Left ventricle myocardium superior (tissue), 1 donor: ENCODE measurements at regions of chr1 and their contacts with region 1.

Region 1: DNA sequence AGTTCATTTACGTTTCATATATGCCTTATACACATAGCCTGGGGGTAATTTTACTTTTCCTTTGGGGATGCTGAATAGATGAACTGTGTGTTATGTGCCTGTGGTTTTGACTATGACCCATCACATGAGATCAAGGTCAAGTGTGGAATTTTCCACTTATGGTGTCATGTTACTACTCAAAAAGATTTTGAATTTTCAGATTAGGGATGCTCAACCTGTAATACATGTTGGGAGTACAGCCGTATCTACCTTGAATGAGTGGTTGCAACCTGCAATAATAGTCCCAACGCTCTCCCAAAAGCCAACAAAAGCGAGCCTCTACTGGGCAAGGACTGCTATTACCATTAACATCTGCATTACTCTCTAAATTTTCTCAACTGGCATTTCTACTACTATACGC is 68.5 kb upstream of the SDC3 start:
- DNase-seq: no peak
- ATAC-seq: peak; percentile 37

Region 2: DNA sequence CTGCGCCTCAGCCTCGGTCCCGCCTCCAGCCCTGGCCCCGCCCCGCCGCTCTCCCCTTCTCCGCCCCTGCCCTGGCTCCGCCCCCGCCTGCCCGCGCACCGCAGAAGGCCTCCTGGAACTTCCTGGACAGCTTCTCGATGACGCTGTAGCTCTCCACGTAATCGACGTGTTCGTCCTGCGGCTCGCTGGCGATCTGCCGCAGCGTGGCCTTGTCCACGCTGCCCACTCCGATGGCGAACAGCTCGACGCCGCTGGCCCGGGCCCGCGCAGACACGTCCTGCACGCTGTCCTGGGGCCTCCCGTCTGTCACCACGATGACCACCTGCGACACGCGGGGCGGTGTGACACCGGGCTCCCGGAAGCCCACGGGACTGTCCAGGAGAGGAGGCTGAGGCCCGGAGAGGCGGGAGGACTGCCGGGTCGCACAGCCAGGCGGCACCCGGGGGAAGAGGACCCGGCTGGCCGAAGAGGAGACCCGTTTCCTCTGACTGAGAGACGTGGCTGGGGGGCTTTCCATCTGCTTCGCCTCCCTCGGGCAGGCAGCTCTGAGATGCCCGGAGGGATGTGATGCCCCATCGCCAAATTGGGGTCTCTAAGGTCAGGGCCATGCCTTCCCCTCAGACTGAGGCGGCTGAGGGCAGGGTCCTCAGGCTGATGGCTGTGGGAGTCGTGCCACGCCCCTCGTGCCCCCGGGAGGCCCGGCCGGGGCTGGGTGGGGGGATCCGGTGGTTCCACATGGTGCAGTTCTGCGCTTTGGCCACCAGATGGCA is 258.3 kb before region 1 on chr1:
- intact Hi-C with region 1: no loop called
- DNase-seq: peak; percentile 82
- ATAC-seq: peak; percentile 87

Region 3: GRCh38 chr1:31027693-31028526 is 50.8 kb after region 1 on chr1:
- intact Hi-C with region 1: loop called (anchors 5 kb)
- DNase-seq: no peak
- ATAC-seq: peak; percentile 71

Region 4: DNA sequence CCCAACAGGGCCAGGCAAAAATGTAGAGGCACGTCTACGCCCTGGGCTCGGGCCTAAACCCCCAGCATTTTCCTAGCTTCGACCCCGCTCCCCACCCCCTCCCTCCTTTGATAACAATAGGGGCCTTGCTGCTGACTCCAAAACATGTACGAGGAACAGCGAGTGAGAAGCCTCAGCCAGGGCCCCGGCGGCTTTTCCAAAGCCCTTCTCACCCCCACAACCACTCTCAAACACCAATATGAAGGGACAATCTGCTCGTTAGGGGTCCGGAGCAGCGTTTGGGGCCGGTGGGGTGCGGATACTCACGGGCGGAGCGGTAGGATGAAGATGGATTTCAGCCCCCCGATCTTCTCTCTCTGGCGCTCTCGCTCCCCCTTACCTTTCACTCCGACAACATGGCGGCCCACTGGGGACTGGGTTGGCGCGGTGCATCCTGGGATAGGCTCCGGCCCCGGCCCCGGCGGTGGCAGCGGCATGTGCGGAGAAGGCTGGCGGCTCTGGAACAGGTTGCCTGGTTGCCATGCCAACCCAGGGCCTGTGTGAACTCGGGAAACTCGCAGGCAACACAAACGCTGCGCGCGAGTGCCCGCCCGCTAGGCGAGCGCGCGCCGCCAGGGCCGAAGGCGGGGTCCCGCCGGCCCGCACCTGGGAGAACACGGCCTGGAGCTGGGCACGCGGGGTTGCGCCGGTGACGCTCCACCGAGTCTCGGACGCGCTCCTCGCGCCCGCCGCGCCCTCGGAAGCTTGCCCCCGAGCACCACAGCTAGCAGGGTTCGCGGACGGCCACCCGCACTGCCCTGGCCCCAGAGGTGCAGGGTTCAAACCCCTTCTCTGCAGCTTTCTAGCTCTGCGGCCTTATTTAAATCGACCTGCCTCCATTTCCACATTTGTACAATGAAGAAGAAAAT is 88.5 kb after region 1 on chr1 and contains the start of gene PUM1:
- intact Hi-C with region 1: loop called (anchors 10 kb)
- DNase-seq: peak; percentile 98
- ATAC-seq: peak; percentile 99
- total RNA-seq, gene PUM1: 75.0 TPM

Region 5: GRCh38 chr1:31705080-31705866 is 728.2 kb after region 1 on chr1:
- intact Hi-C with region 1: no loop called
- DNase-seq: peak; percentile 71
- ATAC-seq: peak; percentile 34